ENCODE measurements at regions of chr20 and their contacts with region 1.

Region 1: DNA sequence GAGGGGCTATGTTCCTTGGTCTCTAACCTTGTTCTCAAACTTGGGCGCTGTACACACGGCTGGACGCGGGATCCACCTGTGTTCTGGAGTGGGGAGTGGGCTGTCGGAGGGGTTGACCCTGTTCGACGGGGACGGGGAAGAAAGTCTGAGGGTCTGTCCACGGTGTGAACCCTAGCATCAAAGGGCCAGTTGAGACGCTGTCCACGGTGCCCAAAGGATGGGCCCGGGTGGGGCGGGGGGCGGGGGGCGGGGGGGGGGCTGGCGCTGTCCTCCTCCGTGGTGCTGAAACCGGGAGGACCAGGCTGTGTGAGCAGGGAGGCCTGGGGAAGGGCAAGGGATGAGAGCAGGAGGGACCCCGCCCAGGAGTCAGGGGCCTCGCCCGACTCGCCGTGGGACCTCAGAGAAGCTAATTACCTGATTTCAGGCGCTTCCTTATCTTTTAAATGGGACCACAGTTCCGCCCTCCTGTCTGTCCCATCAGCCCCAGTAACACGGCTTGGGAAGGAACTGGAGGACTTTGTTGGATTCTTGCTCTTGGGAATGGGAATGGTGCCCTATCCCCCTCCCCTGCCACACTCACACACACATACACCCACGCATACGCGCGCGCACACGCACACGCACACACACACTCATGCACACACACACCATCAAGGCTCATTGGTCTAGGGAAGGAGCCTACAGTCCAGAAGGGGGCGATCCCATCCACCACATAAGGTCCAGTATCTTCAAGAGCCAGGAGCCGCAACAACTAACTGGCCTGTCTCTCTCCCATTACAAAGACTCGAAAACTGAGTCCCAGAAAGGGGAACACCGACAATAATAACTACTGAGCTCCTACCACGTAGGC is 1.0 kb upstream of the VSTM2L start:
- DNase-seq: peak; percentile 74
- ATAC-seq: peak; percentile 70
- H3K4me3 ChIP-seq: peak overlapping the region; percentile 69
- H3K27ac ChIP-seq: no peak overlapping the region
- H3K4me1 ChIP-seq: peaks cover 6% of the 10 kb centered on the region
- H3K27me3 ChIP-seq: no peaks in the 10 kb centered on the region
- CTCF ChIP-seq: peak; percentile 83

Region 2: DNA sequence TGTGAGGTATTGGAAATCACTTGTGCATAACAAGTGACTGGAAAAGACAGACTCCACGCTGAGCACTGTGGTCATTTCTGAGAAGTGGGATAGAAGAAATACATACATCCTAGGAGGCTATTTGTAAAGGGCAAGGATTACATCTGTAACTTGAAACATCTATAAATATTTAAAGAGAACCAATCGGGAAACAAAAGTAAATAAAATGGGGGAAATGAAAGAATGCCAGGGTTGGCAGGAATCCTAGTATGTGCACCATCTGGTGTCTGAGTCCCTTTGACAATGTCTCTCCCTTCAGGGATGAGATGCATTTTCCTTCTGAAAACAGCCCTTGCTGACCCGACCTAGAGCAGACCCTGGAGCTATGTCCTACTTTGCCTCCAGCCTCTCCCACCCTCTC is 54.2 kb after region 1 on chr20:
- CTCF ChIA-PET with region 1: no interaction called
- POLR2A ChIA-PET with region 1: no interaction called
- intact Hi-C with region 1: loop called (anchors 5 kb)
- DNase-seq: peak; percentile 85
- ATAC-seq: peak; percentile 92
- H3K4me3 ChIP-seq: no peak overlapping the region
- H3K27ac ChIP-seq: no peak overlapping the region
- H3K4me1 ChIP-seq: peaks cover 11% of the 10 kb centered on the region
- H3K27me3 ChIP-seq: no peaks in the 10 kb centered on the region
- CTCF ChIP-seq: no peak

Region 3: DNA sequence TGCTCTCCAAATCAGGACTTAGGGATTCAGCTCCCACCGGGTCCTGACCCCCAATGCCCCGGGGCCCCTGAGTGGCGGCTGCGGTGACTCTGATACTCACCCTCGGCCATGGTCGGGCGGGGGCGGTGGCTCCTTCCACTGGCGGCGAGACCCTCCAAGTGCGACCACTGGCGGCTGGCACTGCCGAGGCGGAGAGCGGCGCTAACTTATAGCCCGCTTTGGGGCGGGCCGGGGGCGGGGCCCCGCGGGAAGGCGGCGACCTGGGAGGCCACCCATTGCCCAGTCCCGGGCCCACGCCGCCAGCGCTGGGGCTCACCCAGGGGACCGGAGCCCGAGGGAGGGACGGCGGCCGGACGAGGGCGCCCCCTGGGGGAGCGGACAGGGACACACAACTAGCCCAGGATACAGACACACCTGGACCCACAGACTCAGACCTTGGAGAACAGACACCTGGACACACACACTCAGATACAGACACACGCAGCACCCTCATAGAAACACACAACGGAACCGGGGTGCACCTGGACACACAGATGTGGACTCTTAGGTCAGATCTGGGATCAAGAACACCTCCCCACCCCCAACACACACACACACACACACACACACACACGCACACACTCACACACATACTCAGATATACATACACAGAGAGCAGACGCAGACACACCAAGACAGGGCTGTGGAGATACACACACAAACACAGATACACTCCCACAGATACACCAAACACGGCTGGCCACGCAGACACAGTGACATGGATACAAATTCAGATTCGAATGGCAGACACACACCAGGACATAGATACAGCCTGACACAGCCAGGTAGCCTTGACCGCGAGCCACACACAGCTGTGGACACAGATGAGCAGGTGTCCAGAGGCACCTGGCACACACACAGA is 263.5 kb after region 1 on chr20 and contains the start of gene TGM2:
- CTCF ChIA-PET with region 1: no interaction called
- POLR2A ChIA-PET with region 1: no interaction called
- intact Hi-C with region 1: loop called (anchors 2 kb)
- DNase-seq: peak; percentile 91
- ATAC-seq: peak; percentile 81
- H3K4me3 ChIP-seq: peak within 1 kb of the TSS; percentile 79
- H3K27ac ChIP-seq: peak within 1 kb of the TSS; percentile 72
- H3K4me1 ChIP-seq: peaks cover 73% of the 10 kb centered on the region
- H3K27me3 ChIP-seq: no peaks in the 10 kb centered on the region
- CTCF ChIP-seq: peak; percentile 87
- total RNA-seq, gene TGM2: 583 and 773 TPM in 2 replicates

Region 4: DNA sequence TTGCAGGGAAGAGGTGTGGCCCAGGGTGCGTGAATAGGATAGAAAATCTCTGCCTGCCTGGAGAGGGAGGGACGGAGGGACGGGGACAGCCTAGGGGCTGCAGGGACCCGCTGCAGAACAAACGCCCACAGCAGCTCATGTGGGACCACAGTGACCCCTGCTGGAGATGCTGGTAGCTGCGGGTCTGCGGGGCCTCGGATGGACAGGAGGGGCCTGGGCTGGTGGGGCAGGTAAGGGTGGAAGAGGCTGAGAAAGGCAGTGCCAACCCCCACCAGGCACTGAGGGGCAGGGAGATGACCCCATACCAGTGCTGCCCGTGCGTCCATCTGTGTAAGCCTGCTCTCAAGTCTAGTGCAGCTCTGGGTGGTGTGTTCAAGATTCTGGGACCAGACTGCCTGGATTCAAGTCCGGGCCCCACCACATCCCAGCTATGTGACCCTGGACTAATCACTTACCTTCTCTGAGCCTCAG is 319.3 kb after region 1 on chr20:
- CTCF ChIA-PET with region 1: no interaction called
- POLR2A ChIA-PET with region 1: no interaction called
- intact Hi-C with region 1: loop called (anchors 1 kb)
- DNase-seq: peak; percentile 92
- ATAC-seq: peak; percentile 72
- H3K4me3 ChIP-seq: peak overlapping the region; percentile 14; the same call in 1 of the 2 replicates
- H3K27ac ChIP-seq: peak overlapping the region; percentile 18; the same call in 1 of the 2 replicates
- H3K4me1 ChIP-seq: peaks cover 36% of the 10 kb centered on the region
- H3K27me3 ChIP-seq: no peaks in the 10 kb centered on the region
- CTCF ChIP-seq: peak; percentile 97

Measured in PC-3 (cell line).